ENCODE measurements at regions of chr2 and their contacts with region 1.

Region 1: GRCh38 chr2:24084386-24085361 is at the start of gene TP53I3:
- DNase-seq: peak; percentile 36 to 91 (median 71)
- ATAC-seq: peak; percentile 90 to 97 (median 96)
- H3K4me3 ChIP-seq: peak within 1 kb of the TSS; percentile 55 to 61
- H3K4me3 Mint-ChIP-seq: peak within 1 kb of the TSS; percentile 77 to 90 (median 82)
- H3K27ac ChIP-seq: peak within 1 kb of the TSS; percentile 9
- H3K27ac Mint-ChIP-seq: peak within 1 kb of the TSS; percentile 52 to 61
- H3K4me1 ChIP-seq: peaks cover 0 to 20% of the 10 kb centered on the region in 2 experiments
- H3K4me1 Mint-ChIP-seq: peaks cover 13 to 16% (median 15%) of the 10 kb centered on the region in 3 donors
- H3K27me3 ChIP-seq: peaks cover 0 to 3% of the 10 kb centered on the region in 2 experiments
- H3K27me3 Mint-ChIP-seq: no peaks in the 10 kb centered on the region
- total RNA-seq, gene TP53I3: 0.47 to 0.68 (median 0.58) TPM

Region 2: GRCh38 chr2:23746141-23746863 is 338.4 kb before region 1 on chr2:
- CTCF ChIA-PET with region 1: no interaction called
- POLR2A ChIA-PET with region 1: no interaction called
- DNase-seq: no peak
- ATAC-seq: no peak
- H3K4me3 ChIP-seq: no peak overlapping the region
- H3K4me3 Mint-ChIP-seq: no peak overlapping the region
- H3K27ac ChIP-seq: no peak overlapping the region
- H3K27ac Mint-ChIP-seq: no peak overlapping the region
- H3K4me1 ChIP-seq: no peaks in the 10 kb centered on the region
- H3K4me1 Mint-ChIP-seq: peaks cover 0 to 10% (median 0%) of the 10 kb centered on the region in 3 donors
- H3K27me3 ChIP-seq: no peaks in the 10 kb centered on the region
- H3K27me3 Mint-ChIP-seq: no peaks in the 10 kb centered on the region

Region 3: DNA sequence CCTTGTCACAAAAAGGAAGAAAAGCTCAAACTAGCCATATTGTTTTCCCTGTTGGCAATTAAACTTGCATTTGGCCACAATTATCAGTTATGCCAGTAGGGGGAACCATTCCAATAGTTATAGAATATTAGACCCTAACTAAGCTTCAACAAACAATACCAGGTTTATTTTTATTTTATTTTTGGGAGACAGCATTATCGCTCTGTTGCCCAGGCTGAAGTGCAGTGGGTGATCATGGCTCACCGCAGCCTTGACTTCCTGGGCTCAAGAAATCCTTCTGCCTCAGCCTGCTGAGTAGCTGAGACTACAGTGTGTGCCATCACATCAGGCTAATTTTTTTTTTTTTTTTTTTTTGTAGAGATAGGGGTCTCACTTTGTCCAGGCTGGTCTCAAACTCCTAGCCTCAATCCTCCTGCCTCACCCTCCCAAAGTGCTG is 259.9 kb before region 1 on chr2:
- CTCF ChIA-PET with region 1: interaction called, 10 to 55 read pairs
- POLR2A ChIA-PET with region 1: no interaction called
- DNase-seq: peak in 12 of 35 experiments; percentile 8 to 72 (median 16)
- ATAC-seq: peak; percentile 42 to 60 (median 56)
- H3K4me3 ChIP-seq: no peak overlapping the region
- H3K4me3 Mint-ChIP-seq: no peak overlapping the region
- H3K27ac ChIP-seq: no peak overlapping the region
- H3K27ac Mint-ChIP-seq: no peak overlapping the region
- H3K4me1 ChIP-seq: no peaks in the 10 kb centered on the region
- H3K4me1 Mint-ChIP-seq: no peaks in the 10 kb centered on the region
- H3K27me3 ChIP-seq: no peaks in the 10 kb centered on the region
- H3K27me3 Mint-ChIP-seq: no peaks in the 10 kb centered on the region

Region 4: DNA sequence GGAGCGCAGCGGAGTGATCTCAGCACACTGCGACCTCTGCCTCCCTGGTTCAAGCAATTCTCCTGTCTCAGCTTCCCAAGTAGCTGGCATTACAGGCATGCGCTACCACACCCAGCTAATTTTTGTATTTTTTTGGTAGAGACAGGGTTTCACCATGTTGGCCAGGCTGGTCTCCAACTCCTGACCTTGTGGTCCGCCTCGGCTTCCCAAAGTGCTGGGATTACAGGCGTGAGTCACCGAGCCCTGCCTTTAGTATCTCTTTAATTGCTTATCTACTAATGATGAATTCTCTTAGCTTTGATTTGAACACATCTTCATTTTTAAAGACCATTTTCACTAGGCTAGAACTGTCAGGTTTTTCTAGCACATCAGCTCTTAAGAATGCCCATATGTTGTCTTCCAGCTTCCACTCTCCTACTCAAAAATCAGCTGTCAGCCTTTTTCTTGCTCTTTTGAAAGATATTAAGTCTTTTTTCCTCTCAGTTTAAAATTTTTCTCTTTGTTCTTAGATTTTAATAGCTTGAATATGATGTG is 90.9 kb before region 1 on chr2:
- CTCF ChIA-PET with region 1: no interaction called
- POLR2A ChIA-PET with region 1: no interaction called
- DNase-seq: no peak
- ATAC-seq: no peak
- H3K4me3 ChIP-seq: no peak overlapping the region
- H3K4me3 Mint-ChIP-seq: no peak overlapping the region
- H3K27ac ChIP-seq: no peak overlapping the region
- H3K27ac Mint-ChIP-seq: no peak overlapping the region
- H3K4me1 ChIP-seq: no peaks in the 10 kb centered on the region
- H3K4me1 Mint-ChIP-seq: no peaks in the 10 kb centered on the region
- H3K27me3 ChIP-seq: no peaks in the 10 kb centered on the region
- H3K27me3 Mint-ChIP-seq: no peaks in the 10 kb centered on the region

Region 5: GRCh38 chr2:24153478-24153877 is 68.8 kb after region 1 on chr2:
- CTCF ChIA-PET with region 1: no interaction called
- POLR2A ChIA-PET with region 1: no interaction called
- DNase-seq: no peak
- ATAC-seq: no peak
- H3K4me3 ChIP-seq: no peak overlapping the region
- H3K4me3 Mint-ChIP-seq: no peak overlapping the region
- H3K27ac ChIP-seq: no peak overlapping the region
- H3K27ac Mint-ChIP-seq: no peak overlapping the region
- H3K4me1 ChIP-seq: no peaks in the 10 kb centered on the region
- H3K4me1 Mint-ChIP-seq: no peaks in the 10 kb centered on the region
- H3K27me3 ChIP-seq: no peaks in the 10 kb centered on the region
- H3K27me3 Mint-ChIP-seq: no peaks in the 10 kb centered on the region

Measured in T-cell (primary cell).